Panc1 (cell line): ENCODE measurements at regions of chr3 and their contacts with region 1.

Region 1: DNA sequence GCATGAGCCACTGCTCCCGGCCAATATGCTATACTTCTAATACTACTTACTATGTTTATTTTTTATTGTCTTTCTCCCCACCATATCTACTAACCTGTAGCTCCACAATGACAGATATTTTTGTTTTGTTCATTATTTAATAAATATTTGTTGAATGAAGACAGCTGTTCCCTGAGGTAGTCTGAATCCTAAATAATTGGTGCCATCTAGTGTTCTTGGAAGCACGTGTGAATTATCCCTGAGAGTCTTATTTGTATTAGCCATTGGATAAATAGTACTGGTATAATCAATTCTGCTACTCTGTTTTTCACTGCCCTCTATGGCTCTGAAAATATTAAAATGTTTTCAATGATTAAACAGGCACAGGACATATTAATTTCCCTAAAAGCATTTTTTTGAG is 5.6 kb upstream of the APPL1 start:
- DNase-seq: no peak
- ATAC-seq: no peak
- H3K4me3 ChIP-seq: no peak overlapping the region
- H3K27ac ChIP-seq: no peak overlapping the region
- H3K4me1 ChIP-seq: peaks cover 9% of the 10 kb centered on the region
- H3K27me3 ChIP-seq: no peaks in the 10 kb centered on the region
- CTCF ChIP-seq: peak; percentile 49; the same call in 1 of the 2 replicates

Region 2: GRCh38 chr3:57179580-57180410 is 42.1 kb before region 1 on chr3:
- CTCF ChIA-PET with region 1: interaction called, 3 read pairs
- POLR2A ChIA-PET with region 1: no interaction called
- in situ Hi-C with region 1: no loop called
- intact Hi-C with region 1: loop called (anchors 5 kb)
- DNase-seq: no peak
- ATAC-seq: peak; percentile 86
- H3K4me3 ChIP-seq: no peak overlapping the region
- H3K27ac ChIP-seq: no peak overlapping the region
- H3K4me1 ChIP-seq: no peaks in the 10 kb centered on the region
- H3K27me3 ChIP-seq: no peaks in the 10 kb centered on the region; the same call in 1 of the 2 replicates
- CTCF ChIP-seq: peak; percentile 64